ENCODE measurements at regions of chr16 and their contacts with region 1.

Region 1: GRCh38 chr16:35525734-35526594 is 2066.6 kb downstream of the TP53TG3F start:
- DNase-seq: no peak
- H3K4me3 ChIP-seq: no peak overlapping the region
- H3K27ac ChIP-seq: no peak overlapping the region
- H3K4me1 ChIP-seq: no peaks in the 10 kb centered on the region
- H3K27me3 ChIP-seq: no peaks in the 10 kb centered on the region

Region 2: GRCh38 chr16:35585411-35585810 is 59.4 kb after region 1 on chr16:
- in situ Hi-C with region 1: loop called (anchors 10 kb)
- DNase-seq: no peak
- H3K4me3 ChIP-seq: no peak overlapping the region
- H3K27ac ChIP-seq: no peak overlapping the region
- H3K4me1 ChIP-seq: no peaks in the 10 kb centered on the region
- H3K27me3 ChIP-seq: no peaks in the 10 kb centered on the region

Region 3: GRCh38 chr16:35629001-35629400 is 103.0 kb after region 1 on chr16:
- in situ Hi-C with region 1: no loop called
- DNase-seq: no peak
- H3K4me3 ChIP-seq: no peak overlapping the region
- H3K27ac ChIP-seq: no peak overlapping the region
- H3K4me1 ChIP-seq: no peaks in the 10 kb centered on the region
- H3K27me3 ChIP-seq: no peaks in the 10 kb centered on the region

Measured in GM23248 (cell line).